MCF 10A (cell line): ENCODE measurements at regions of chr1 and their contacts with region 1.

Region 1: DNA sequence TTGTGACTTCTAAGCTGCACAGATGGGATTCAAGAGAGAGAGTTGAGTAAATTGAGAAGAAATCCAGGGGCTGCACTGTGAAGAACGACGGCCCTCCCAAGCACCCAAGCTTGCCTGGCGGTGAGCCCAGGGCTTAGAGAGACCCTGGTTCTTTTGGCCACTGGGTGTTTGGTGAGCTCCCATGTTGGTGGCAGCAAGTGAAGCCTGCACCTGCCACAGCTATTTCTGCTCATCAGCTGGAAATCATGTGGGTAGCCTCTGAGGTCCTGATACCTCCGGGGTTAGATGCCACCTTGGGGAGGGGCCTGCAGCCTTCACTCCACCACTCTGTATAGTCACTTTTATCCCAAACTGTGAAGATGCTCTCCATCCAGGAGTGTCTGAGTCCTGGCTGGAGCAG is 6.2 kb upstream of the BTG2 start:
- DNase-seq: no peak
- H3K4me3 Mint-ChIP-seq: no peak overlapping the region
- H3K27ac Mint-ChIP-seq: no peak overlapping the region
- H3K4me1 Mint-ChIP-seq: peaks cover 11% of the 10 kb centered on the region
- H3K27me3 Mint-ChIP-seq: peaks cover 10% of the 10 kb centered on the region
- CTCF ChIP-seq: no peak

Region 2: DNA sequence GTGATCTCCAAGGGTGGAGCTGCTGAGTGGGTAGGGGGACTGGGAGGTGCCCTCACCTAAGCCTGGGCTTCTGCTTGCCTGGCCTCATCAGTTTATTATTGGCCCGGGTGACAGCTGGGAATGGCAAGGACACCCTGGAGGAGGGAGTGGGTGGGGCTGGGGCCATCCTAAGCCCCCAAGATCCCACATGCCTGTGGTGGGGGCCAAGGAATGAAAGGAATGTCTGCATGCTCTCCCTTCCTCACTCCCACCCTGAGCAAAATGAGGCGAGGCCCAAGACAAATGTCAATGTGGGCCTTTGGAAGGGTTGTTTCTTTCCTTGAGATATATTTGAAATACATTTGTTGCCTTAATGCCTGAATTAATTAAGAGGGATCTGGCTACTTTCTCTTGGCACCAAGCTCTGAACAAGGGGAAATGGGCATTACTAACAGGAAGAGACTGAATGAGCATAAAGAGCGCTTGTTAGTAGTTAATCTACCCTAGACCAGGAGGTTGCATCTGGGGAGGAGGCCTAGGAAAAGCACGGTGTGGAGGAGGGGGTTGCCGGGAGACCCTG is 93.0 kb before region 1 on chr1:
- CTCF ChIA-PET with region 1: no interaction called
- POLR2A ChIA-PET with region 1: no interaction called
- intact Hi-C with region 1: no loop called
- DNase-seq: no peak
- H3K4me3 Mint-ChIP-seq: no peak overlapping the region
- H3K27ac Mint-ChIP-seq: no peak overlapping the region
- H3K4me1 Mint-ChIP-seq: peaks cover 9% of the 10 kb centered on the region
- H3K27me3 Mint-ChIP-seq: peaks cover 11% of the 10 kb centered on the region
- CTCF ChIP-seq: no peak

Region 3: DNA sequence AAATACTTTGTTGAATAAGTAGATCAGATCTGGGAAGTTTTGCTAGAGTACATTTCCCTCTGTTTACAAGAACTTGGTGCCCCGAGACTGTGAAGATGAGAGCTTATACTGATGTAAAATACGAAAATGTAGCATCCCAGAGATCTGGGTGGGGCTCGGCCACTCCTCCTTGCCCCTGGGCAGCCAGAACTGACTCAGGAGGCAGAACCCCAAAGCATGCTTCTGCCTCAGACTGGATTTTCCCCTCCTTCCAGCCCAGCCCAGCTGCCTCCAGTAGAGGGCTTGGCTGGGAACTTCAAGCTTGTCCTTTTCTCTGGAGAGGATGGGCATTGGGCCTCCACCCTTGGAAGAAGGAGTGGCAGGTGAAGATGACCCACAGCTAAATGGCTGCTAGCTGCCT is 18.2 kb before region 1 on chr1:
- CTCF ChIA-PET with region 1: interaction called, 5 read pairs
- POLR2A ChIA-PET with region 1: interaction called, 11 read pairs
- intact Hi-C with region 1: no loop called
- DNase-seq: peak; percentile 79
- H3K4me3 Mint-ChIP-seq: no peak overlapping the region
- H3K27ac Mint-ChIP-seq: no peak overlapping the region
- H3K4me1 Mint-ChIP-seq: peaks cover 21% of the 10 kb centered on the region
- H3K27me3 Mint-ChIP-seq: no peaks in the 10 kb centered on the region
- CTCF ChIP-seq: peak; percentile 39